ENCODE measurements at regions of chr1 and their contacts with region 1.

Region 1: GRCh38 chr1:246002725-246003441 is 504.2 kb downstream of the SMYD3 start:
- DNase-seq: peak; percentile 90
- ATAC-seq: peak; percentile 46
- H3K4me3 ChIP-seq: no peak overlapping the region
- H3K27ac ChIP-seq: peak overlapping the region; percentile 29; the same call in 1 of the 2 replicates
- H3K4me1 ChIP-seq: peaks cover 17% of the 10 kb centered on the region
- H3K27me3 ChIP-seq: no peaks in the 10 kb centered on the region
- CTCF ChIP-seq: peak; percentile 92
- POLR2A ChIP-seq: 0 out of 2 replicates have a peak, but pooled peaks have one; percentile 49
- RAD21 ChIP-seq: peak; percentile 97

Region 2: DNA sequence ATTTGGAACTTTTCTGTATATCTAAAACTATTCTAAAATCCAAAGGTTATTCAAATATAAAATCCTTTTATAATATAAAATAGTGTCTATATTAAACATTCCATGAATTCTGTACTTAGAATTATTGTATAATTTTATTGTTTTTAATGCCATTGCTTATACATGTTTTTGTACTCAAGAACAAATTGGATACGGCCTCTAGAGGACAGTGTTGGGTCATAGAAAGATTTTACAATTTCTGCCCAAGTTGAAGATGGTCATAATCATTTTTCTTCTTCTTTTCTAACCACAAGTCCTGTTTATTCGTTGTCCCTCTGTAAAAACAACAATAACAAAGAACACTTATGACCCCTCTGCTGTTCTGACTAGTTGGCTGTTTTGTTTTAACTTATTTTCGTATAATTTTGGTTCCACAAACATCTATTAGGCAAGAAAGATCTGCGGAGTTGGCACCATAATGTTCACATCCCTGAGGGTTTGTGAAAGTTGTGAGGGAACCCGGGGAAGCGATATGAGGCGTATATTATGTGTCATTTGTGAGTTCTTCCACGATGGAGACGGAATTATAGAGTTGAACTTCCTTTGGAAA is 923.8 kb before region 1 on chr1:
- CTCF ChIA-PET with region 1: no interaction called
- POLR2A ChIA-PET with region 1: no interaction called
- dilution Hi-C with region 1: no loop called
- in situ Hi-C with region 1: loop called (anchors 10 kb)
- intact Hi-C with region 1: loop called (anchors 1 kb)
- DNase-seq: peak; percentile 77
- ATAC-seq: peak; percentile 69
- H3K4me3 ChIP-seq: no peak overlapping the region
- H3K27ac ChIP-seq: no peak overlapping the region
- H3K4me1 ChIP-seq: peaks cover 2% of the 10 kb centered on the region; the same call in 1 of the 2 replicates
- H3K27me3 ChIP-seq: no peaks in the 10 kb centered on the region
- CTCF ChIP-seq: peak; percentile 94
- POLR2A ChIP-seq: no peak
- RAD21 ChIP-seq: peak; percentile 92

Region 3: DNA sequence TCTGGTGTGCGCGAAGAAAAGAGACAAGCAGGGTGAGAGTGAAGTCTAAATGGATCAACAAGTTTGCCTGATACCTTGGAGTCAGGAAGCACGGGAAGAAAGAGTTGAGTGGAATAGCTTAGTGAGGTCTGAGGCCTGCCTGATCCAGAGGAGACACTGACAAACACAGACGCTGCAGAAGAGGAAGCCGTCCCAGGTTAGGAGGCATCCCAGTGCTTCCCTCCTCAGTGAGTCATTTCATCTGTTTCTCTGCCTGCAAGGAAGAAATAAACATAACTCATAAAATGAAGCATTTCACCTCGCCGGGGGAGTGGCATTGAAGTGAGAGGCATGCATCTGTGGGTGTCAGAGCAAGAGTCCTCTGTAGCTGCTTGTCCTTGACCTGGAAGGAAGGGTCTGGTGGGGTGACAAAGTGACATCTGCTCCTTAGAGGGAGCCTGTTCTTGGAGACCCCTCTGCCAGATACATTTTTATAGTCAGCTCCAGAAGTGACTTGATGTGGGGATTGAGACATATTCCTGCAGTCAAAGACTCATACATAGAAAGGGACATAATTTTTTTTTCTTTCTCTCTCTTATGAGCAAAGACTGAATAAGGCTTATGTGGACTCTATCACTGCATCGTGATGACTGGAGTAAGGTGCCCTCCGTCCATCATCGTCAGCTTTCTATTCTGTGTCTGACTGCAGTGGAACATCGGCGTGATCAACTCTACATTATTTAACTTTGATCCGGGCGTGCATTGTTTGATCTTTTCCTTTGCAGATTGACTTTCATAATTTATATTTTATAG is 591.4 kb before region 1 on chr1:
- CTCF ChIA-PET with region 1: no interaction called
- POLR2A ChIA-PET with region 1: no interaction called
- dilution Hi-C with region 1: no loop called
- in situ Hi-C with region 1: no loop called
- intact Hi-C with region 1: loop called (anchors 10 kb)
- DNase-seq: peak; percentile 75
- ATAC-seq: peak; percentile 98
- H3K4me3 ChIP-seq: no peak overlapping the region
- H3K27ac ChIP-seq: peak overlapping the region; percentile 52
- H3K4me1 ChIP-seq: peaks cover 6% of the 10 kb centered on the region
- H3K27me3 ChIP-seq: no peaks in the 10 kb centered on the region
- CTCF ChIP-seq: no peak
- POLR2A ChIP-seq: no peak
- RAD21 ChIP-seq: no peak

Region 4: GRCh38 chr1:245599371-245600174 is 403.3 kb before region 1 on chr1:
- CTCF ChIA-PET with region 1: interaction called, 3 read pairs
- POLR2A ChIA-PET with region 1: no interaction called
- dilution Hi-C with region 1: no loop called
- in situ Hi-C with region 1: no loop called
- intact Hi-C with region 1: loop called (anchors 2 kb)
- DNase-seq: peak; percentile 94
- ATAC-seq: peak; percentile 95
- H3K4me3 ChIP-seq: no peak overlapping the region
- H3K27ac ChIP-seq: peak overlapping the region; percentile 89; the same call in 1 of the 2 replicates
- H3K4me1 ChIP-seq: peaks cover 11% of the 10 kb centered on the region
- H3K27me3 ChIP-seq: no peaks in the 10 kb centered on the region
- CTCF ChIP-seq: no peak
- POLR2A ChIP-seq: no peak
- RAD21 ChIP-seq: no peak

Region 5: DNA sequence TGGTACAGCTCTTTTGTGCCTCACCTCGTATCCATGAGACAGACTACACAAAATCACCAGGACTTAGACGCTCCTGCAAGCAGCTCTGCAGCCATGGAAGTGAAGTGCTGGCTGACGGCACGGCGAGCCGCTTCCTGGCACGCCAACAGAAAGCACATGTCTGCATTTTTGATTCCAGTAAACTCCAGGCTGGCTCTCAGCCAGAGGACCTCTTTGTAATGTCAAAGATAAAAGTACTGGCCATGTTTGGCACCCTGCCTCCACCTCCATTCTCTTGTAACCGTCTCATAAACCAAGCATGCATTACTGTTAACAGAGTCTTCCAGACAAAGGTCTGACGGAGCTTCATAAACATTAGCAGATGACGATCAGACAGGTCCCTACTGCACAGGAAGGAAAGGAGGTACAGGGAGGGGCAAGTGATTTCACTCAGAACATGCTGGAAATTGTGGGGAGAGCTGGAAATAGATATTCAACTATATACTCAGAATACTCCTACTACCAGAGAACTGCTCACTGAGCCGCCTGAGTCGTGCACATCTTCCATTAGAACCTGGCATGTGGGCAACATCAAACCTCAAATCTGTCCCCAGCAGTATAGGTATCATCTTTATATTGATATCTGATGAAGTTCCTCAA is 127.8 kb before region 1 on chr1:
- CTCF ChIA-PET with region 1: no interaction called
- POLR2A ChIA-PET with region 1: no interaction called
- dilution Hi-C with region 1: no loop called
- in situ Hi-C with region 1: no loop called
- intact Hi-C with region 1: loop called (anchors 5 kb)
- DNase-seq: peak; percentile 100
- ATAC-seq: peak; percentile 74
- H3K4me3 ChIP-seq: no peak overlapping the region
- H3K27ac ChIP-seq: peak overlapping the region; percentile 91
- H3K4me1 ChIP-seq: peaks cover 45% of the 10 kb centered on the region
- H3K27me3 ChIP-seq: no peaks in the 10 kb centered on the region
- CTCF ChIP-seq: no peak
- POLR2A ChIP-seq: no peak
- RAD21 ChIP-seq: peak; percentile 3; the same call in 1 of the 2 replicates

Region 6: DNA sequence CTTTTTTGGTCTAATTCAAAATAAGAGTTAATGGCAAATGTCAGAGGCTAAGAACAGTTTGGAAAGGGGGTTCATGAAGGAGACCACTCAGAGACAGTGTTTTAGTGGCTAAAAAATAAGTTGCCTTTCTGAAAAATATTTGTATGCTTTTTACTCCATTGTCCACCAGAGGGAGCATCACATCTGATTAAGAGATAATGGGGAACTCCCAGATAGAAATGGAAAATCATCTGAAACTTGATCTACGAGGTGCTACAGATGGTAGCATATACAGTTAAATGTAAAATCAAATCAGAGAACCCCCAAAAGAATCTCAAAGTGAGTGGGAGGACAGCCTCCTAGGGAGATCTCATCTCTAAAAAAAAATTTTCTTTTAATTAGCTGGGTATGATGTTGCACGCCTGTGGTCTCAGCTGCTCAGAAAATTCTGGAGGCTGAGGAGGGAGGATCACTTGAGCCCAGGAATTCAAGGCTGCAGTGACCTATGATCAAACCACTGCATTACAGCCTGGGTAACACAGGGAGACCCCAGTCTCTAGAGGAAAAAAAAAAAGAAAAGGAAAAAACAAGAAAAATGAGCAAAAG is 494.5 kb after region 1 on chr1:
- CTCF ChIA-PET with region 1: interaction called, 3 read pairs
- POLR2A ChIA-PET with region 1: no interaction called
- dilution Hi-C with region 1: no loop called
- in situ Hi-C with region 1: no loop called
- intact Hi-C with region 1: loop called (anchors 2 kb)
- DNase-seq: peak; percentile 79
- ATAC-seq: peak; percentile 57
- H3K4me3 ChIP-seq: no peak overlapping the region
- H3K27ac ChIP-seq: no peak overlapping the region
- H3K4me1 ChIP-seq: peaks cover 6% of the 10 kb centered on the region
- H3K27me3 ChIP-seq: no peaks in the 10 kb centered on the region
- CTCF ChIP-seq: peak; percentile 82
- POLR2A ChIP-seq: no peak
- RAD21 ChIP-seq: peak; percentile 62